Breast epithelium (tissue), 4 donors: ENCODE measurements at regions of chr10 and their contacts with region 1.

Region 1: DNA sequence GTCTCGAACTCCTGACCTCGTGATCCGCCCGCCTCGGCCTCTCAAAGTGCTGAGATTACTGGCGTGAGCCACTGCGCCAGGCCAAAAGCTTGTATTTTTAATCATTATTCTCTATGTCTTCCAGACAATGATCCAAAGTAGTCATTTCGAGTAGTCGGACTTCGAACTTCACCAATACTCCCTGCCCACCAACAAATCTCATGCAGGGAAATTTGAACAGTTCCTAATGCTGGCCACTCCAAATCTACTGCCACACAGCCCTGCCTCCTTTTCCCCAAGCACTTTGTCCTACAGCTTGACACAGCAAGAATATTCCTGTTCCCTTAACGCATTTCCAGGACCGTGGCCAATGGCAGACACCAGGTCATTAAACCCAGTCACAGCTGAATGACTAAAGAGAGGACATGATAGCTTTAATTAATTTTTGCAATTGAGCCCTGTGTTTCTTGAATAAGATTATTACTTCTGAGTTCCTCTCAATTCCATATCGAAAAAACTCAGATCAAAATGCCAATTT is 142.3 kb upstream of the NRP1 start:
- DNase-seq: no peak
- H3K4me3 ChIP-seq: no peak overlapping the region
- H3K27ac ChIP-seq: no peak overlapping the region
- H3K4me1 ChIP-seq: no peaks in the 10 kb centered on the region
- H3K27me3 ChIP-seq: no peaks in the 10 kb centered on the region
- CTCF ChIP-seq: no peak
- POLR2A ChIP-seq: no peak

Region 2: GRCh38 chr10:32271617-32272016 is 1205.2 kb before region 1 on chr10:
- intact Hi-C with region 1: no loop called
- DNase-seq: no peak
- H3K4me3 ChIP-seq: no peak overlapping the region
- H3K27ac ChIP-seq: no peak overlapping the region
- H3K4me1 ChIP-seq: no peaks in the 10 kb centered on the region
- H3K27me3 ChIP-seq: no peaks in the 10 kb centered on the region
- CTCF ChIP-seq: no peak
- POLR2A ChIP-seq: no peak

Region 3: GRCh38 chr10:33341637-33342036 is 135.2 kb before region 1 on chr10:
- intact Hi-C with region 1: loop called (anchors 10 kb)
- DNase-seq: no peak
- H3K4me3 ChIP-seq: no peak overlapping the region
- H3K27ac ChIP-seq: no peak overlapping the region
- H3K4me1 ChIP-seq: no peaks in the 10 kb centered on the region
- H3K27me3 ChIP-seq: no peaks in the 10 kb centered on the region
- CTCF ChIP-seq: no peak
- POLR2A ChIP-seq: no peak